Left cardiac atrium (tissue), 4 donors: ENCODE measurements at regions of chr3 and their contacts with region 1.

Region 1: GRCh38 chr3:196631682-196632045 is 7.8 kb upstream of the NRROS start:
- DNase-seq: no peak
- ATAC-seq: no peak

Region 2: DNA sequence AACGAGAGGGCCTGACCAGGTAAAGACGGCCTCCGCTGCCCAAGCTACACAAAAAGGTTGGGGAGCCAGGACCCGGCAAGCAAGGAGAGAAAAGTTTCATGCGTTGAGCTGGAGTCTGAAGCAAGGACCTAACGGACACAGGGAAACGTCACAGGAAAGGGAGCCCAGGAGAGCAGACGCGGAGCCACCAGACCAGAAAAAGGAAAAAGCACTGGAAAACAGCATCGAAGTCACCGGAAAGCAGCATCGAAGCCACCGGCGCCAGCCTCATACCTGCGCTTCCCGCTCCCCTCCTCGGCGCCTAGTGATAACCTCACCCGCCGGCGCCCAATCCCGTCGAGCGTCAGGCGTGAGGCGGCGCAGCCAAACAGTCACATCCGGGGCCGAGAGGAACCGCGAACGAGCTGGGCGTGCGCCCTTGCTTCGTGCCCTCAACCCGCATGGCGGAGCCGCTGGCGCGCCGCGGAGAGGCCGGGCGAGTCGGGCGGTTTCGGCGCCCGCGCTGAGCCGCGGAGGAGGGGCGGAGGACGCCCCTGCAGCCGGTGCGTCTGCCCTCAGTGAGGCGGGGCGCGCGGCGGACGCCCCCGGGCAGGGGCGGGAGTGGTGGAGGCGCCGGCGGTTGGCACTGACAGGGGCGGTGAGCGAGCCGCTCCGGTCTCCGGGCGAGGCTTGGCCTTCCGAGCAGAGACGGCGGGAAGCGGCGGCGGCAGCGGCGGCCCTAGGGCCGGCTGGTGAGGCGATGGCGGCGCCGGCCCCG is 63.2 kb before region 1 on chr3 and contains the starts of genes FBXO45 and WDR53:
- intact Hi-C with region 1: loop called in 1 of 2 experiments (anchors 2 kb)
- DNase-seq: peak; percentile 97
- ATAC-seq: peak; percentile 99
- total RNA-seq, gene FBXO45: 7.9 to 8.4 TPM
- total RNA-seq, gene WDR53: 8.8 to 9.4 TPM

Region 3: GRCh38 chr3:196694202-196694638 is 62.6 kb after region 1 on chr3:
- intact Hi-C with region 1: no loop called
- DNase-seq: no peak
- ATAC-seq: no peak

Region 4: GRCh38 chr3:196842567-196843434 is 211.1 kb after region 1 on chr3:
- intact Hi-C with region 1: no loop called
- DNase-seq: no peak
- ATAC-seq: no peak